Calu3 (cell line): ENCODE measurements at regions of chr13 and their contacts with region 1.

Region 1: DNA sequence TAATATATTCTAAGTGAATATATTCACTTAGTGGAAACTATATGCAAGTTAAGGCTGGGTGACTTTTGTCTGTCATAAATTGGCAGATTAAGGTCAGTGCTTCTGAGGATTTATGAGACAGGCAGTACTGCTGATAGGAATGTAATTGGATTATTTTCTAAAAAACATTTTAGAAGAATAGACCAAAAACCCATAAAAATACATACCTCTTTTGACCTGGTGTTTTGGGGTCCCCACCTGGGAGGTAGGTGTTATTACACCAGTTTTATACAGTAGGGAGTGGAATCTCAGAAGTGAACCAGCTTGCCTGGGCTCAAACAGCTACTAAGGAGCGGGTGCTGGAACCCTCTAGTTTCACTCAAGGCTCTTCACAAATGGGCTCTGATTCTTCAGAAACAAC is 25.3 kb downstream of the COG3 start:
- DNase-seq: peak; percentile 5
- H3K4me3 Mint-ChIP-seq: no peak overlapping the region
- H3K27ac Mint-ChIP-seq: no peak overlapping the region
- H3K4me1 Mint-ChIP-seq: no peaks in the 10 kb centered on the region
- H3K27me3 Mint-ChIP-seq: no peaks in the 10 kb centered on the region
- CTCF ChIP-seq: no peak

Region 2: GRCh38 chr13:45412274-45413049 is 77.6 kb before region 1 on chr13:
- CTCF ChIA-PET with region 1: no interaction called
- intact Hi-C with region 1: loop called (anchors 5 kb)
- DNase-seq: no peak
- H3K4me3 Mint-ChIP-seq: no peak overlapping the region
- H3K27ac Mint-ChIP-seq: peak overlapping the region; percentile 13
- H3K4me1 Mint-ChIP-seq: peaks cover 16% of the 10 kb centered on the region
- H3K27me3 Mint-ChIP-seq: no peaks in the 10 kb centered on the region
- CTCF ChIP-seq: no peak

Region 3: DNA sequence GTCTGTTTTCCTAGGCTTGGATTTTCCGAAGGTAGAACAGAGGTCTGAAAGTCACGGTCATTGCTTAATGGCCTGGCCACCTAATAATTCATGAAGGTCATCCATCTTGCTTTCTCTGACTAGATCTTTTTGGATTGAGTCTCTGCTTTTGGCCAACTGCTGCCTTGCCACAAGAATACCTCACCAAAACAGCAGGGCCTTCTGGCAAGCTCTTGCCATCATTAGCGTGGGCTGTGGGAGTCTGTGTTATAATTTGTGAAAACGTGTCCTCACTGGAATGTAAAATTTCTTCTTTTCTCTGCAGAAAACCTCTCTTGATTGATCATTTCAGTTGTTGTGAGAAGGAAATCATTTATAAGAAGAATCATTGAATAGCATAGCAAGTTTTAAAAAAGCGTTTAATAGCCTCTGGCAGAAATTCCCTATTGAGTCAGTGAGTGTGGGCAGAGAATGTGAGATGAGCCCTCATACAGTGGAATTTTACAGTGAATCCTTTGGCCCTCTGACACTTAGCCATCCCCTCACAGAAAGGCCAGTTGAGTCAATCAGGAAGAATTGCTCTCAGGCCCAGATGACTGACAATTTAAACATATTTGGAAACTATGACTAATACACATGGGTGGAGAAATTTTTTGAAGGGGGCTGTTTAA is 168.6 kb after region 1 on chr13:
- CTCF ChIA-PET with region 1: no interaction called
- intact Hi-C with region 1: no loop called
- DNase-seq: no peak
- H3K4me3 Mint-ChIP-seq: no peak overlapping the region
- H3K27ac Mint-ChIP-seq: no peak overlapping the region
- H3K4me1 Mint-ChIP-seq: no peaks in the 10 kb centered on the region
- H3K27me3 Mint-ChIP-seq: peaks cover 63% of the 10 kb centered on the region
- CTCF ChIP-seq: no peak